ENCODE measurements at regions of chr16 and their contacts with region 1.

Region 1: GRCh38 chr16:69123910-69124309 is 8.5 kb downstream of the CHTF8 start:
- DNase-seq: peak; percentile 60
- H3K4me3 ChIP-seq: no peak overlapping the region
- H3K27ac ChIP-seq: no peak overlapping the region
- H3K4me1 ChIP-seq: peaks cover 0 to 10% (median 3%) of the 10 kb centered on the region in 4 donors
- H3K27me3 ChIP-seq: no peaks in the 10 kb centered on the region
- CTCF ChIP-seq: peak; percentile 63 to 82 (median 65)
- EP300 ChIP-seq: no peak
- POLR2A ChIP-seq: no peak

Region 2: DNA sequence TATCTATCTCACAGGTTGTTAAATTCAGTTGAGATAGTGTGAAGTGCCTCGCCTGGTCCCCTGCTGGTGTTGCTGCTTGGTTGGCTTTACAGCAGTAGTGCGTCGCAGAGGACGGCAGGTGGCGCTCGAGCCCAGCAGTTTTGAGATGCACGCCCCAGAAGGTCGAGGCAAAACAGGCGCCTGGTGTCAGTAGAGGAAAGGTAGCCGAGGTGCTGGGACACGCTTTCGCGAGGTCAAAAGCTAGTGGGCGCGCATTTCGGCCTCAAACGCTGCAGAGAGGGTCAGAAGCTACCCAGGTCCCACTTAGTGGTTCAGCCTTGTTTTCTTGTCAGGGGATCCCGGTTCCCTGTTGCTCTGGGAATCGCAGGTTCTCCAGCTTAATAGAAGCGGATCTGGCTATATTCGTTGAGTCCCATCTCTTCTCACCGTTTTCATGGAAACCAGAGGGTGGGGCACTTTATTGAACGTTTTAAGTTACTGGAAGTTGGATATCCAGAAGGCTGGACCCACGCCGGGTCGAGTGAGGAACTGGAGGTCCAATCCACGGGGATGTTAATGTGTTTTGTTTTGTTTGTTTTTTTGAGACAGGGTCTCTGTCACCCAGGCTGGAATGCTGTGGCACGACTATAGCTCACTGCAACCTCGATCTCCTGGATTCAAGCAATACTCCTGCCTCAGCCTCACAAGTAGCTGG is 595.1 kb before region 1 on chr16:
- in situ Hi-C with region 1: no loop called
- intact Hi-C with region 1: loop called (anchors 2 kb)
- DNase-seq: peak; percentile 91
- H3K4me3 ChIP-seq: peak overlapping the region in 1 of 4 donors; percentile 25
- H3K27ac ChIP-seq: peak overlapping the region in 2 of 4 donors; percentile 1 to 28
- H3K4me1 ChIP-seq: peaks cover 4 to 20% (median 18%) of the 10 kb centered on the region in 4 donors
- H3K27me3 ChIP-seq: no peaks in the 10 kb centered on the region
- CTCF ChIP-seq: peak; percentile 90 to 95 (median 93)
- EP300 ChIP-seq: no peak
- POLR2A ChIP-seq: no peak

Region 3: GRCh38 chr16:68843482-68844210 is 280.3 kb before region 1 on chr16 and contains the start of gene TANGO6:
- in situ Hi-C with region 1: loop called in 1 of 4 experiments (anchors 10 kb)
- intact Hi-C with region 1: no loop called
- DNase-seq: peak; percentile 89
- H3K4me3 ChIP-seq: peak within 1 kb of the TSS; percentile 55 to 97 (median 68)
- H3K27ac ChIP-seq: peak within 1 kb of the TSS; percentile 80 to 89 (median 84)
- H3K4me1 ChIP-seq: peaks cover 0 to 26% (median 11%) of the 10 kb centered on the region in 4 donors
- H3K27me3 ChIP-seq: no peaks in the 10 kb centered on the region
- CTCF ChIP-seq: peak in 1 of 5 experiments; percentile 5
- EP300 ChIP-seq: no peak
- POLR2A ChIP-seq: peak; percentile 65
- total RNA-seq, gene TANGO6: 10.6 to 55.4 (median 22.8) TPM

Region 4: GRCh38 chr16:68893710-68894705 is 229.9 kb before region 1 on chr16:
- in situ Hi-C with region 1: loop called in 1 of 4 experiments (anchors 10 kb)
- intact Hi-C with region 1: no loop called
- DNase-seq: peak; percentile 30
- H3K4me3 ChIP-seq: no peak overlapping the region
- H3K27ac ChIP-seq: no peak overlapping the region
- H3K4me1 ChIP-seq: peaks cover 0 to 4% (median 2%) of the 10 kb centered on the region in 4 donors
- H3K27me3 ChIP-seq: no peaks in the 10 kb centered on the region
- CTCF ChIP-seq: no peak
- EP300 ChIP-seq: no peak
- POLR2A ChIP-seq: no peak

Region 5: DNA sequence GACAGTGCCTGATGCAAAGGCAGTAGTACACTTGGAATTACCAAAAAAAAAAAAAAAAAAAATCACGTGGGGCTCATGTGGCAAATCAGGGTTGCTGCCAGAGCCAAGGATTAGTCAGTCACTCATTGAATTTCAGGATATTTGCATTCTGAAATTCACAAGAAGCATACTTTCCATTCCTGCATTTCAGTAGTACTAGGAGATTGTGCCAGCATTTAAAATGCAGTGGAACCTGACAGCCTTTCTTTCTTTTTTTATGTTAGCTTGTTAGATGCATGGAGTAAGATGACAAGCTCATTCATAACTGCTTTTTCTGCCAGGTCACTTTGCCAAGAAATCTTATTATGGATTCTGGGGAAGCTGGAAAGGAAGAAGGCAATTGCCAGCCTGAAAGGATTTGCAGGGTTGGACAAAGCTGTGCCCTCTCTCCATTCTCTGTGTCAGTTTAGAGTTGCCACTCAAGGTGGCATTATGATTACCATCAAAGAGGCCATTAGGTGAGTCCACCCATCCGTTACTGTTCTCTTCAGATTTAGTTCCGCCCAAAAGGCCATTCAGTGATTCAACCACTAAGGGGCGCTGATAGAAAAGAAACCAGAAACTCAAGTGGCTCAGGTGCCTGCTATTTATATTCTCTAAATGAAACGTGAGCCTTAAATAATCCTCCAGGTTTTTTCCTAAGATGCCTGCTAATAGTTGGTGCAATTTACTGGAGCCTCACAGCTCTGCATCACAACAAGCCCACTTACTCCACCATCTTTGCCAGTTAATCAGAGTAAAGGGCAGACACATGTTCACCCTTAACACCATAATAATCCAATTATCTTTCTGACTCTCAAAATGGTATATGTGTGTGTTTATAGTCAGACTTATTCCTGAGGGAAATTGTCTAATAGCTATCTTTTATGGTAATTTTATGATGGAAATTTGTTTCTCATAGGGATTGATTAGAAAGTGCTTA is 221.6 kb before region 1 on chr16:
- in situ Hi-C with region 1: loop called in 3 of 4 experiments (anchors 10 to 25 kb)
- intact Hi-C with region 1: no loop called
- DNase-seq: peak; percentile 50
- H3K4me3 ChIP-seq: no peak overlapping the region
- H3K27ac ChIP-seq: no peak overlapping the region
- H3K4me1 ChIP-seq: peaks cover 0 to 9% (median 3%) of the 10 kb centered on the region in 4 donors
- H3K27me3 ChIP-seq: no peaks in the 10 kb centered on the region
- CTCF ChIP-seq: peak; percentile 54 to 79 (median 67)
- EP300 ChIP-seq: no peak
- POLR2A ChIP-seq: no peak

Measured in transverse colon (tissue), 4 donors.